GM10248 (cell line): ENCODE measurements at regions of chr11 and their contacts with region 1.

Region 1: GRCh38 chr11:77619576-77620198 is 17.9 kb downstream of the CLNS1A start:
- DNase-seq: peak; percentile 20
- CTCF ChIP-seq: peak; percentile 71

Region 2: DNA sequence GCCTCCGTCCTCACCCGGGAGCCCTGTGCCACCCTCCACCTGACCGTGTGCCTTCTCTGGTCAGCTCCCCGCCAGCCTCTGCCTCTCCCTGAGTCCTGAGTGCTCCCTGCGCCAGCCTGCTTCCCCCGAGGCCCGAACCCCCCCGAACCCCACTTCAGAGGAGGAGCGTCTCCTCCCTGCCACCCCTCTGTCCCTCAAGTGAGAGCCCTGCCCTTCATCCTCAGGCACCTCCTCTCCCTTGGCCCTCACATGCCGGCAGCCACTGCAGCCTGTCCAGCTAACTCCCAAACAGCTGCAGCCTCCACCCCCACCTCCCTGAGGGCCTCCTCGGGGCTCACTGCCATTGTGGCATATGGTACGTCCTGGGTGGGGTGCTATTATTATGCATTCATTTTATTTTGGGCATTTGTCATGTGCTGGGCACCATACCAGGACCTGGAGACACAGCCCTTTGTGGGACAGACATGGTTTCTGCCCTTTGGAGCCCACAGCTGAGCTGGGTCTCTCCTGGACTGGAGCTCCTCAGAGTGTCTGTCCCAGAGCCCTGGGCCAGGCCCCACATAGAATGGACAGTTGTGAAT is 424.4 kb before region 1 on chr11:
- CTCF ChIA-PET with region 1: interaction called, 15 read pairs
- POLR2A ChIA-PET with region 1: no interaction called
- DNase-seq: no peak
- CTCF ChIP-seq: no peak

Region 3: DNA sequence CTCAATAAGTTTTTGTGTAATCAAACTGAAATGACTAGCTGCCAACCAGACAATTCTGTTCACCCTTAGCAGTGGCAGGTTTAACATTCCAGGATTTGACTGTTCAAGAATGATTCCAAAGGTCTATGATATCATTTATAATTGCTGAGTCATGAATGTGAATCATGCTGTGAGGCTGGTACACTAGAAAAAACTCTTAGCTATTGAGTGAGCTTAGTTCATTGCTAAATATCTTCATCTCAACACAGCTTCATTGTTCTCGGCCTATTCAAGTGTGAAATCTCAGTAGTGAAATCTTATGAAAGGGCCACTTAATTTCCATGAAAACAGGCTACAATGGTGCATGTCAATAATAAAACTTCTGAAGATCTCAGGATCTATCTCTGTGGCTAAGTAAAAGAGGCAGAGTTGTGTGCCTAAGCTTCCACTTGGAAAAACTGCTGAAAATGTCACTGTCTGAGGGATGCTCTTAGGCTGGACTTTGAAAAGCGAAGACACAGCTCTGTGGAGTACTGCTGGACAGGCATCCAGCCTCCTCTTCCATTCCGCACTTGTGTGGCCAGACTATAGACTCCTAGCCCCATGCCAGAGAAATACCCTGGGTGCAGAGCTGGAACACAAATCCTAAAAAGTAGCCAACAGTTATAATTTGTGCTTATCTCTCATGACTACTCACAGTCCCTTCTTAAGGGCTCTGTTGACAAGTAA is 17.2 kb before region 1 on chr11:
- CTCF ChIA-PET with region 1: interaction called, 22 read pairs
- POLR2A ChIA-PET with region 1: no interaction called
- DNase-seq: no peak
- CTCF ChIP-seq: no peak

Region 4: DNA sequence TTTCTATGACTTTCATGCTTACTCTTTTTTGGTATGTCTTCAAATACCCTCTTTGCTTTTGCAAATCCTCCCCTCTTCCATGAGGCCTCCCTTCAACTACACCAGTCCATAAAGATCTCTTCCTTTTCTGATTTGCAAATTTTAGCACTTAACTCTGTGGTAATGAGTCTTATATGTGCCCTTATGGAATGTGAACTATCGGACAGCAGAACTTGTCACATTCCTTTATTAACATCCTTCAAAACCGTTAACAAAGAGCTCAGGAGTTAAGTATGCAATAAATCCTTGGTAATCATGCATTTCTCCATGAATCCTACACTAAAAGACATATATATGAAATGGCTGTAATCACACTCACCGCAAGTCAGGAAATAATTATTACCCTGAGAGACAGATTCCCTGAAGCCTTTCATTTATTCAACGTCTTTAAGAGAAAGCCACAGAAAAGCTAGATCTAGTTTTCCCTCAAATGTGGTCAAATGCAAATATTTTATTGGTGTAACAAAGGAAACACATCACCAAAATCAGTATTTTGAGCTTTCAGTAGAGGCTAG is 10.5 kb after region 1 on chr11:
- CTCF ChIA-PET with region 1: interaction called, 20 read pairs
- POLR2A ChIA-PET with region 1: no interaction called
- DNase-seq: no peak
- CTCF ChIP-seq: no peak

Region 5: GRCh38 chr11:77642228-77642627 is 22.5 kb after region 1 on chr11:
- CTCF ChIA-PET with region 1: no interaction called
- POLR2A ChIA-PET with region 1: no interaction called
- DNase-seq: no peak
- CTCF ChIP-seq: no peak

Region 6: DNA sequence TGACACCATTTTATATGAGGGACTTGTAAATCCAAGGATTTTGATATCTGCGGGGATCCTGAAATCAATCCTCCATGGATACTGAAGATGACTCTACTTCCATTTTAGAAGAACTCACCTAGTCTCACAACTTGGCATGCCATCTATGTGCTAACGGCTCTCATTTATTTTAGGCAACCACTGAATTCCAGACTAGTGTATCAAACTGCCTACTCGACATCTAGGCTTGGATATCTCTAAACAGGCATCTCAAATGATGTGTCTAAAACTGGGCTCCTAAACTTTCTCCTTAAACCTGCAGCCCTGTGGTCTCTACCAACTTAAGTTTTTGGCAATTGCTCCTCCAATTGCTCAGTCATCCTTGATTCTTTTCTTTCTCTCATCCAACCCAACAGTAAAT is 49.1 kb after region 1 on chr11:
- CTCF ChIA-PET with region 1: no interaction called
- POLR2A ChIA-PET with region 1: no interaction called
- DNase-seq: no peak
- CTCF ChIP-seq: no peak